ENCODE measurements at regions of chr5 and their contacts with region 1.

Region 1: DNA sequence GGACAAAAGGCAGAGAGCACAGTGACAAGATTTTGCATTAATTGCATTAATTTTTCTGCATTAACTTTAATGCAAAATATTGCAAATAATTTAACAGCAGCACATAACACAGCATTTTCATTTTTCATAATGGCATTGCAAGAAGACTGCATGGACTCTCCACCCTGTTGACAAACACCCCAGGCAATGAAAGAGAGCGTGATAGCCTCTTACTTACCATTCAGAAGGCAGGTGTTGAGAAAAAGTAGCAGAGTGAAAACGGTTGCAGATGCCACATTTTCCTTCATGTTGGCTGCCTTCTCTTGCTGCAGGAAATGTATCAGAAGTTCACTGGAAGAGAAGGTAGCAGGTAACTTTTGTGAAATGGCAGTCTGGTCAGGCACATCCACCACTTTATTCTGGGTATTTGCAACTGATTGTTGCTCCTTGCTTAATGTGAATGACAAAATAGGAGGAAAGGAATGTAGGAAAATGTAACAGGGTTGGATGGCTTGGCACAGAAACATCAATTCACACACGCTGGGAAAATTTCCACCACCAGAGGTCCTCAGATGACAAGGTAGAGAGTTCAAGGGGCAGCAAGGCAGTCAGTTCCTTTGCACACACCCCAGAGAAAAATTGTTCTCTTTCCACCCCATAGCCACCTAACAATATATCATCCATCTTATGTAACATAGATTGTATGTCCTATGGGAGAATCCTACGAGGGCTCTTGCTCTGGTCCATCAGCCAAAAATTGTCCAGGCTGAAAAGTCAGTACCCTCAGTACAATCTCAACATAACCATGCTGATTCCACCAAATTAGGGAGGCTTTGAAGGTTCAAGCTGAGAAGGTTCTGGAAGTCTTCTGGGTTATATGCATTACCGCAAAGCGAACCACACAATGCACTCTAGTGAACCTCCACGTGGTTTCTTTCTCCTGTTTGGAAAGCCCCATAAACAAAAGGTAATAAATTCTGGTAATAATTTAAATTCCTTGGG is 41.9 kb upstream of the AGXT2 start:
- DNase-seq: peak; percentile 15
- H3K4me3 Mint-ChIP-seq: no peak overlapping the region
- H3K27ac Mint-ChIP-seq: no peak overlapping the region
- H3K4me1 Mint-ChIP-seq: no peaks in the 10 kb centered on the region
- H3K27me3 Mint-ChIP-seq: peaks cover 4% of the 10 kb centered on the region

Region 2: DNA sequence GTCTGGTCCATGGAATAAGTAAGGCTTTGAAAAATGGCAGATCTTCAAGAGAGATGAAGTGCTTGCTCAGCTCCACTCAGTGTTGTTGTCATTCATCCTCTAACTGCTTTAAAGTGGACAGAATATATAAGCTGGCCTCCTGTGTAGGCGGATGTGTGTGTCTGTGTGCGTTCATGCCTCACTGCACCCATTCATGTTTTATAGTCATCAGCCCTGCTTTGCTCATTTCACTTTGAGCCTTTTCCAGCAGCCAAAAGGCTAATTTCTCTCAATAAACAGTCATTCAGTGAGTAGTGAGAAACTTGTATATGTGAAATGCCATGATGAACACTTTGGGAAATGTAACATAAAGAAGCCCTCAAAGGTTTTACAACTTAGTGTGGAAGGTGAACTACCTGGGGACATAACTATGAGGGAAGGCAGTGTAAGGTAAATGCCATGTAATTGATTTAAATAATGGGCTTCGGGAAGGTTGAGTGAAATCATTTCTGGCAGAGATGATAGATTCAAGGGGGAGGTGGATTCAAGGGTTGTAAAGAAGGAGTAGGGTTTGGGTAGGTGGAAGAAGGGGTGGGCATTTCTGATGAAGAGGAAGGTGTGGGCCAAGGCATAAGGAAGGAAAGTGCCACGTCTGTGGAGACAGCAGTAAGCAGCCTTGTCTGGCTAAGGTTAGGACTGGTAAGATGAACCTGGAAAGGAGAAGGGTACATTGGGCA is 235.0 kb before region 1 on chr5:
- intact Hi-C with region 1: no loop called
- DNase-seq: no peak
- H3K4me3 Mint-ChIP-seq: no peak overlapping the region
- H3K27ac Mint-ChIP-seq: no peak overlapping the region
- H3K4me1 Mint-ChIP-seq: no peaks in the 10 kb centered on the region
- H3K27me3 Mint-ChIP-seq: no peaks in the 10 kb centered on the region

Region 3: DNA sequence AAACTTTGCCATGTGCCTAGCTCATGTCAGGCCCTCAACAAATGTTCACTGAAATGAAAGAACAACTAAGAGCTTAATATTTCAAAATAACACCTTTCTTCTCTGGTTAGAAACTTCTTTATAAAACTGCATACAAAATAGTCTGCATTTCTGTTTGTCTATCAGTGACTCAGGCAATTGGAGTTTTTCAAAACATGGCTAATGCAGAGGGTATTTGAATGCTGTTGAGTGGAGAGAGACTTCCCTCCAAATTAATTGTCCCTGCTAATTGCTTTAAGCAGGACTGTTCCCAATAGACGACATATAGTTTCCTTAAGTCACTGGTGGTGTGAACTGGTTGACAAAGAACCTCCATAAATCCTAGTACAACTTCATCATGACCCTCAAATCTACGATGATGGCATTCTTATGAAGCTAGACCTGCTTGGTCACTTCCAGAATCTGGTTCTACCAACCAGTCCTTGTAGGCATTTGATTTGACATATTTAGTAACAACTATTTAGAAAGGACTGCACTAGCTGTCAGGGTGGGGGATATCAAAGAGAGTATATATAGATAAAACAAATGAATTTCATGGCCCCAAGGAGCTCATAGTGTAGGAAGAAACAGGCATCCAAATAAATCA is 56.2 kb after region 1 on chr5:
- intact Hi-C with region 1: no loop called
- DNase-seq: no peak
- H3K4me3 Mint-ChIP-seq: no peak overlapping the region
- H3K27ac Mint-ChIP-seq: no peak overlapping the region
- H3K4me1 Mint-ChIP-seq: no peaks in the 10 kb centered on the region
- H3K27me3 Mint-ChIP-seq: peaks cover 14% of the 10 kb centered on the region

Region 4: DNA sequence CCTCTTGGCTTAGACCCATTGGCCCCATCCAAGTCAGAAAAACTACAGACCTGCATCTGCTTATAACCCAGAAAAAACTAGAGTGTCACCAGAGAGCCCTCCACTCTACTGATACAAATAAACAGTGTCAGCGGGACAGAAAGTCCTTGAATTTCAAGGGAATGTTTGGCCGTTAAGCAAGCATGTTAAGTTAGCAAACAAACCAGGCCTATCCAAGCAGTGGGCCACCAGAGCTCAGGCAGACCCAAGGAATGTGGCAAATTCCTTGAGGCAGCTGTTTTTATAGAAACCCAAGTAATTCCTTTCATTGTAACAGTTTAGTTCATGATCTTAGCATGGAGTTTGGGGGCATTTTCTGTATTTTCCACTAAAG is 69.7 kb after region 1 on chr5:
- intact Hi-C with region 1: no loop called
- DNase-seq: no peak
- H3K4me3 Mint-ChIP-seq: no peak overlapping the region
- H3K27ac Mint-ChIP-seq: no peak overlapping the region
- H3K4me1 Mint-ChIP-seq: no peaks in the 10 kb centered on the region
- H3K27me3 Mint-ChIP-seq: peaks cover 3% of the 10 kb centered on the region

Region 5: GRCh38 chr5:35182541-35183535 is 93.2 kb after region 1 on chr5:
- intact Hi-C with region 1: loop called (anchors 2 kb)
- DNase-seq: no peak
- H3K4me3 Mint-ChIP-seq: no peak overlapping the region
- H3K27ac Mint-ChIP-seq: no peak overlapping the region
- H3K4me1 Mint-ChIP-seq: no peaks in the 10 kb centered on the region
- H3K27me3 Mint-ChIP-seq: peaks cover 2% of the 10 kb centered on the region

Region 6: DNA sequence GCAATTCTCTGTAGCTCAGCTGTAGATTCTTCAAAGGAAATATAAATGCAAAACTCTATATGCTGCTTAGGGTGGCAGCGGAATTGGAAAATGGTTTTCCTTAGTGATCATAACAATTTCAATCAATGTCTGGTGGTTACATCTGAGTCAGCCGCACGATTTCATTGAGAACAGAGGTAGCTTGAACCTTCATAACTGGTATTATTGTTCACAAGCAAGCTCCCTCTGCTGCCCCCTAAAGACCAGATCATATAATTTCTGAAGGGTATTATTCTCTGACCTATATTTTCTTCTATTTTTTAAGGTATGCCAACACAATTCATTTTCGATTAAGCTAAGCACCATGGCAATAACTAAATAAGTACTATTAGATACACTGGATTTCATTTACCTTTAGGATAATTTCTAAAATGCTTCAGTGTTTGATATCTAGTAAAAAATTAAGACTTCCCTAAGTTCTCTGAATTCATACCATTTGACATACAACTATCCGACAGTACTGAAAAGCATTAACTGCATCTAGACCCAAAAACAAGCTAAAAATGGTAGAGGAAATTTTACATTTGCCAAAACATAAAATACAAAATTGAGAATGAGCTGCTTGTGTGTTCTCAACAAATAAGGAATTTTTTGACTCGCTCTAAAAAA is 346.9 kb after region 1 on chr5:
- intact Hi-C with region 1: loop called (anchors 5 kb)
- DNase-seq: no peak
- H3K4me3 Mint-ChIP-seq: no peak overlapping the region
- H3K27ac Mint-ChIP-seq: no peak overlapping the region
- H3K4me1 Mint-ChIP-seq: no peaks in the 10 kb centered on the region
- H3K27me3 Mint-ChIP-seq: peaks cover 28% of the 10 kb centered on the region

Region 7: GRCh38 chr5:35651002-35651756 is 561.6 kb after region 1 on chr5:
- intact Hi-C with region 1: loop called (anchors 5 kb)
- DNase-seq: peak; percentile 50
- H3K4me3 Mint-ChIP-seq: no peak overlapping the region
- H3K27ac Mint-ChIP-seq: no peak overlapping the region
- H3K4me1 Mint-ChIP-seq: peaks cover 5% of the 10 kb centered on the region
- H3K27me3 Mint-ChIP-seq: no peaks in the 10 kb centered on the region